T-cell (primary cell): ENCODE measurements at regions of chr19 and their contacts with region 1.

Region 1: DNA sequence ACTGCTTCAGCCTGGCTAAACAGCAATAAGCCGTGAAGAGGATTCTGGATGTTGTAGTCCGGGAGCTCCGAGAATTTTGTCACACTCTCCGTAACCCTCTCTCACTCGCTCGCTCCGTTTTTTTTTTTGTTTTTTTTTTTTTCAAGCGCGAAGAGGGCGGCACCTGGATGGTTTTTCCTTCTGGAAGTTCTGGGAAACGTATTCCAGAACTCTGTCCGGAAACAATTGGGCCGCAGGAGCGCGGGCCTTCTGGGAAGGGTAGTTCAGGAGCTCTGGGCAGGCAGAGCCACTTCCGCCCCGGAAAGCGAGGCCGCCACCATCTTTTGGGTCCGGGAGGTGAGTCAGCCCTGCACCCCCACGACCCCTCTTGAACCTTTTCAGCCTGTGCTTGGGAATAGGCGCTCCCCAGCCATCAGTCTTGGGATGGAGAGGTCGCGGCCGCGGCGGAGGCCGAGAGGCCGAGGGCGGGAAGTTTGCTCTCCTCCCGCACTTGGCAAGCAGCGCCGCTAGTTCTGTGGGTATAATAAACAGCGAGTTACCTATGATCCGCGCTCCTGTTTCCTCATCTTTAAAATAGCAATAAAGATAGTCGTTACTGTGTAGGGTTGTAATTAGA is at the start of gene ZNF227:
- DNase-seq: peak; percentile 57 to 87 (median 74)
- ATAC-seq: peak; percentile 97 to 99 (median 98)
- H3K4me3 ChIP-seq: peak within 1 kb of the TSS; percentile 88 to 92
- H3K4me3 Mint-ChIP-seq: peak within 1 kb of the TSS; percentile 94 to 96 (median 95)
- H3K27ac ChIP-seq: peak within 1 kb of the TSS; percentile 75
- H3K27ac Mint-ChIP-seq: peak within 1 kb of the TSS; percentile 94 to 95
- H3K4me1 ChIP-seq: peaks cover 9 to 12% of the 10 kb centered on the region in 2 experiments
- H3K4me1 Mint-ChIP-seq: peaks cover 30 to 41% (median 37%) of the 10 kb centered on the region in 3 donors
- H3K27me3 ChIP-seq: no peaks in the 10 kb centered on the region
- H3K27me3 Mint-ChIP-seq: no peaks in the 10 kb centered on the region
- total RNA-seq, gene ZNF227: 17.6 to 45.5 (median 43.9) TPM

Region 2: GRCh38 chr19:44164673-44165512 is 47.5 kb before region 1 on chr19 and contains the start of gene ZNF226:
- CTCF ChIA-PET with region 1: interaction called in 1 of 2 experiments, 6 read pairs
- POLR2A ChIA-PET with region 1: interaction called, 4 to 15 read pairs
- DNase-seq: peak; percentile 58 to 91 (median 72)
- ATAC-seq: peak; percentile 97 to 98 (median 98)
- H3K4me3 ChIP-seq: peak within 1 kb of the TSS; percentile 68 to 96
- H3K4me3 Mint-ChIP-seq: peak within 1 kb of the TSS; percentile 94 to 98 (median 97)
- H3K27ac ChIP-seq: peak within 1 kb of the TSS; percentile 78
- H3K27ac Mint-ChIP-seq: peak within 1 kb of the TSS; percentile 88 to 99
- H3K4me1 ChIP-seq: peaks cover 7 to 16% of the 10 kb centered on the region in 2 experiments
- H3K4me1 Mint-ChIP-seq: peaks cover 38 to 42% (median 38%) of the 10 kb centered on the region in 3 donors
- H3K27me3 ChIP-seq: no peaks in the 10 kb centered on the region
- H3K27me3 Mint-ChIP-seq: no peaks in the 10 kb centered on the region
- total RNA-seq, gene ZNF226: 12.3 to 42.0 (median 38.0) TPM